ENCODE measurements at regions of chrX and their contacts with region 1.

Region 1: DNA sequence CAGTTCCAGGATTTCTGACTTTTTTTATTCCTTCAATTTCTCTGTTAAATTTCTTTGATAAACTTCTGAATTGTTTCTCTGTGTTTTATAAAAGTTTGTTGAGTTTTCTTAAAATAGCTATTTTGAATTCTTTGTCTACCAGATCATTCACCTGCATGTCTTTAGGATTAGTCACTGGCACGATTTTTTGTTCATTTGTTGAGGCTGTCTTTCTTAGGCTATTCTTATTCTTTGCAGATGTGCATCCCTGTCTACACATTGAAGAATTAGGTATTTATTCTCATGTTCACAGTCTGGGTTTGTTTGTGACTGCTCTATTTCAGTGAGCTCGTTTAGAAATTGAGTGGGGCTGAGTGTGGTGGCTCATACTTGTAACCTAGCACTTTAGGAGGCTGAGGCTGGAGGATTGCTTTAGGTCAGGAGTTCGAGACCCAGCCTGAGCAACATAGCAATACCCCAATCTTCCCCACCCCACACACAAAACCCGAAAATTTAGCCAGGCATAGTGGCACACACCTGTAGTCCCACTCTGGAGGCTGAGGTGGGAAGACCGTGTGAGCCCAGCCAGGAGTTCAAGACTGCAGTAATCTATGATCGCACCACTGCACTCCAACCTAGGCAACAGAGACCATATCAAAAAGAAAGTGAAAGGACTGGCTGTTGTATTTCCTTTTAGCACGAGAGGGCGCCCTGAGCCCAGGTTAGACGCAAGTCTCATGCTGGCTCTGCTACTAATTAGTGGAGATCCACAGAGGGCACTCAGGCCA is 42.0 kb downstream of the F8 start:
- DNase-seq: peak; percentile 56 to 72 (median 65)
- ATAC-seq: peak in 3 of 4 donors; percentile 88 to 91 (median 91)
- H3K4me3 ChIP-seq: peak overlapping the region in 10 of 12 donors; percentile 29 to 56 (median 42)
- H3K27ac ChIP-seq: peak overlapping the region in 1 of 12 donors; percentile 17
- H3K4me1 ChIP-seq: no peaks in the 10 kb centered on the region
- H3K27me3 ChIP-seq: no peaks in the 10 kb centered on the region
- CTCF ChIP-seq: peak; percentile 47 to 70 (median 65)
- POLR2A ChIP-seq: no peak

Region 2: GRCh38 chrX:155056877-155057792 is 76.6 kb after region 1 on chrX:
- intact Hi-C with region 1: loop called (anchors 2 to 5 kb)
- DNase-seq: peak; percentile 49 to 75 (median 57)
- ATAC-seq: peak; percentile 72 to 95 (median 88)
- H3K4me3 ChIP-seq: peak overlapping the region in 5 of 12 donors; percentile 12 to 25 (median 18)
- H3K27ac ChIP-seq: peak overlapping the region in 8 of 12 donors; percentile 4 to 70 (median 42)
- H3K4me1 ChIP-seq: peaks cover 0 to 15% (median 6%) of the 10 kb centered on the region in 12 donors
- H3K27me3 ChIP-seq: no peaks in the 10 kb centered on the region
- CTCF ChIP-seq: peak; percentile 64 to 82 (median 70)
- POLR2A ChIP-seq: no peak

Region 3: DNA sequence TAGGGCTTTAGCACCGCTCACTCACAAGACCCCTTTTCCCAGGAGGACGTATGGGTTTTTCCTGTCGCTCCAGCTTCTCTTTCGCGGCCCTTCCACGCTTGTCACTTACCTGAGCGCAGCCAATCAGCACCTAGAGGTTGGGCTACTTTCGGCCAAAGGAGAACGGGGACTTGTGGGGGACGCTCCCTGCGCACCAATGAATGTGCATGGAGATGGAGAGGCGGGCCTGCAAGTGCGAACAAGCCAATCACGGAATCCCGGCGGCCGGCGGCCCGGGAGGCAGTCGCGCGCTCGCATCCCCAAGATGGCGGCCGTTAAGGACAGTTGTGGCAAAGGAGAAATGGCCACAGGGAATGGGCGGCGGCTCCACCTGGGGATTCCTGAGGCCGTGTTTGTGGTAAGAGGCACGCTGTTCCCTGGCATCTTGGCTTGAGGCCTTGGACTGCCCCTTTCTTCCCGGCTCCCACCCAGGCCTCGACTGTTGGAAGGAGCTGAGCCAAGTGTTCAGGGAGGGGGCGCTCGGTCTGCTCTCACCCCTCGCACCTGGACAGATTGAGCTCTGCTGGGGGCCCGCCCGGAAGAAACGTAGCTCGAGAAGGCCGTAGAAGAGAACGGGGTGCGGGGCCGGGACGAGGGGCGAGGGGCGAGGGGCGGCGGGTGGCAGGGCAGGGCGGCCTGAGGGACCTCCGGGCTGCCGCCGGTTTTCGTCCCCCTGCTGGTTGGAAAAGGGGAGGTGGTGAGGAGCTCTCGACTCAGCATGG is 235.8 kb after region 1 on chrX and contains the start of gene VBP1:
- intact Hi-C with region 1: loop called in 1 of 10 experiments (anchors 10 kb)
- DNase-seq: peak; percentile 92 to 94 (median 92)
- ATAC-seq: peak; percentile 99 to 100 (median 99)
- H3K4me3 ChIP-seq: peak within 1 kb of the TSS; percentile 47 to 88 (median 74)
- H3K27ac ChIP-seq: peak within 1 kb of the TSS; percentile 79 to 92 (median 88)
- H3K4me1 ChIP-seq: peaks cover 0 to 27% (median 5%) of the 10 kb centered on the region in 12 donors
- H3K27me3 ChIP-seq: no peaks in the 10 kb centered on the region
- CTCF ChIP-seq: peak in 10 of 12 donors; percentile 26 to 59 (median 46)
- POLR2A ChIP-seq: no peak
- total RNA-seq, gene VBP1: 39.6 to 82.8 (median 72.3) TPM